Heart right ventricle (tissue), 16 donors: ENCODE measurements at regions of chr11 and their contacts with region 1.

Region 1: GRCh38 chr11:82718307-82718706 is 15.4 kb downstream of the FAM181B start:
- DNase-seq: peak in 1 of 2 donors; percentile 16
- ATAC-seq: peak in 7 of 8 donors; percentile 36 to 78 (median 72)
- H3K4me3 ChIP-seq: no peak overlapping the region
- H3K27ac ChIP-seq: no peak overlapping the region
- H3K4me1 ChIP-seq: peaks cover 0 to 25% (median 6%) of the 10 kb centered on the region in 9 donors
- H3K27me3 ChIP-seq: peaks cover 0 to 12% (median 5%) of the 10 kb centered on the region in 7 donors
- CTCF ChIP-seq: peak; percentile 14 to 86 (median 69)

Region 2: GRCh38 chr11:82782825-82783374 is 64.6 kb after region 1 on chr11:
- intact Hi-C with region 1: loop called in 1 of 10 experiments (anchors 10 kb)
- DNase-seq: no peak
- ATAC-seq: no peak
- H3K4me3 ChIP-seq: no peak overlapping the region
- H3K27ac ChIP-seq: no peak overlapping the region
- H3K4me1 ChIP-seq: no peaks in the 10 kb centered on the region
- H3K27me3 ChIP-seq: no peaks in the 10 kb centered on the region
- CTCF ChIP-seq: no peak

Region 3: DNA sequence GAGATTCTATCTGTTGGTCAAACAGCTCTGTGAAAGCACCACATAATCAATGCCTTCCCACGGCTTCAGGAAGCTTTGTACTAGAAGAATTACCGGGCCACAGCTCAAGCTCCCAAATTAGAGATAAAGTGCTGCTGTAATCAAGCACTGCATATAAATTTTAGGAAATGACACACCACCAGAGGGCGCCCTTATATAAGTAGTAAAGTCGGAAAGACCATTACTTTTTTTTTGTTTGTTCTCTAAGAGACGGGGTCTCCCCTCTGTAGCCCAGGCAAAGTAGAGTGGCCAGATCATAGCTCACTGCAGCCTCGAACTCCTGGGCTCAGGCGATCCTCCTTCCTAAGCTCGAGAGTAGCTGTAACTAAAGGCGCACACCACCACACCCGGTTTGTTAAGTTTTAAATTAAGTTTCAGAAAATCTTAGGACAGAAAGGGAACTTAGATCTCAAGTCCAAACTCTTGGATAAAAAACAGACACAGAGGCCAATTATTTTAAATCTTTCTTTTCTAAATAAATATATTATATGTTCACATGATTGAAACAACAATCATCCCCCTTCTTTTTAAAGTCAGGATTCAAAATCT is 149.3 kb after region 1 on chr11:
- intact Hi-C with region 1: loop called in 7 of 10 experiments (anchors 2 to 10 kb)
- DNase-seq: peak in 1 of 2 donors; percentile 89
- ATAC-seq: peak in 7 of 8 donors; percentile 22 to 74 (median 56)
- H3K4me3 ChIP-seq: peak overlapping the region in 6 of 10 donors; percentile 19 to 38 (median 32)
- H3K27ac ChIP-seq: peak overlapping the region in 2 of 10 donors; percentile 16 to 48
- H3K4me1 ChIP-seq: peaks cover 0 to 69% (median 29%) of the 10 kb centered on the region in 9 donors
- H3K27me3 ChIP-seq: no peaks in the 10 kb centered on the region
- CTCF ChIP-seq: peak; percentile 55 to 87 (median 74)

Region 4: GRCh38 chr11:82927254-82927880 is 209.1 kb after region 1 on chr11:
- intact Hi-C with region 1: loop called in 2 of 10 experiments (anchors 5 kb)
- DNase-seq: peak in 1 of 2 donors; percentile 20
- ATAC-seq: peak in 2 of 8 donors; percentile 51 to 63
- H3K4me3 ChIP-seq: no peak overlapping the region
- H3K27ac ChIP-seq: no peak overlapping the region
- H3K4me1 ChIP-seq: peaks cover 0 to 12% (median 0%) of the 10 kb centered on the region in 9 donors
- H3K27me3 ChIP-seq: no peaks in the 10 kb centered on the region
- CTCF ChIP-seq: peak in 8 of 9 donors; percentile 68 to 89 (median 80)

Region 5: DNA sequence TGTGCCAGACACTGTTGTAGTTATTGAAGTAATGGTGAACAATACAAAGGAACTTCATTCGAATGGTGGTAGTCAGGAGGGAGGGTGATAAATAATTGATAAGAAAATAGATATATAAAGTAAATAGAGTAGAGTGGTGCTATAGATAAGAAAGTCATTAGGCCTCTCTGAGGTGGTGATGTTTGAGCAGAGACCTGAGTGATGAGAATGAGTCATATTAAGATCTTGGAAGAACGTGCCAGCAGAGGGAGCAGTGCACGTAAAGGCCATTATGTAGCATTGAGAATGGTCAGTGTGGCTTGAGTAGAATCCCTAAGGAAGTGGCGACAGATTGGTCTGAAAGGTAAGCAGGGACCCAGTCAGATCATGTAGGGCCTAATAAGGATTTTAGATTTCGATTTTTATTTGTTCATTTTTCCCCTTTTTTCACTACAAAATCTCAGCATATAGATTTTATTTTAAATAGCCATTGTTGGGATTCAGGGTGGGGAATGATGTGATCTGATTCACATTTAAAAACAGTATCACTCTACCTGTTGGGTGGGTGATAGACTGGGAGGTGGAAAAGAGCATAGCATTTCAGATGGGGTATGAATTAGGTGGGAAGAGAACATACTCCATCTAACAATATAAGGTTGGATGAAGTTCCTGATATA is 523.1 kb after region 1 on chr11:
- intact Hi-C with region 1: loop called in 1 of 10 experiments (anchors 10 kb)
- DNase-seq: peak in 1 of 2 donors; percentile 19
- ATAC-seq: peak in 4 of 8 donors; percentile 62 to 85 (median 74)
- H3K4me3 ChIP-seq: no peak overlapping the region
- H3K27ac ChIP-seq: no peak overlapping the region
- H3K4me1 ChIP-seq: peaks cover 0 to 3% (median 0%) of the 10 kb centered on the region in 9 donors
- H3K27me3 ChIP-seq: no peaks in the 10 kb centered on the region
- CTCF ChIP-seq: peak in 8 of 9 donors; percentile 16 to 65 (median 58)

Region 6: GRCh38 chr11:83249972-83250593 is 531.8 kb after region 1 on chr11:
- intact Hi-C with region 1: loop called in 4 of 10 experiments (anchors 10 kb)
- DNase-seq: no peak
- ATAC-seq: peak in 3 of 8 donors; percentile 42 to 65 (median 55)
- H3K4me3 ChIP-seq: no peak overlapping the region
- H3K27ac ChIP-seq: no peak overlapping the region
- H3K4me1 ChIP-seq: no peaks in the 10 kb centered on the region
- H3K27me3 ChIP-seq: no peaks in the 10 kb centered on the region
- CTCF ChIP-seq: peak; percentile 43 to 84 (median 69)